Activated CD4-positive, alpha-beta memory T cell treated with anti-CD3 and anti-CD28 coated beads, Interleukin-2, amount 10 ng/mL, durations not matched to agents 7 days and 5 days (primary cell): ENCODE measurements at regions of chr2 and their contacts with region 1.

Region 1: GRCh38 chr2:36785179-36785795 is 88.8 kb downstream of the VIT start:
- DNase-seq: peak; percentile 67
- H3K4me3 Mint-ChIP-seq: no peak overlapping the region
- H3K27ac Mint-ChIP-seq: no peak overlapping the region
- H3K4me1 Mint-ChIP-seq: no peaks in the 10 kb centered on the region
- H3K27me3 Mint-ChIP-seq: peaks cover 38% of the 10 kb centered on the region

Region 2: DNA sequence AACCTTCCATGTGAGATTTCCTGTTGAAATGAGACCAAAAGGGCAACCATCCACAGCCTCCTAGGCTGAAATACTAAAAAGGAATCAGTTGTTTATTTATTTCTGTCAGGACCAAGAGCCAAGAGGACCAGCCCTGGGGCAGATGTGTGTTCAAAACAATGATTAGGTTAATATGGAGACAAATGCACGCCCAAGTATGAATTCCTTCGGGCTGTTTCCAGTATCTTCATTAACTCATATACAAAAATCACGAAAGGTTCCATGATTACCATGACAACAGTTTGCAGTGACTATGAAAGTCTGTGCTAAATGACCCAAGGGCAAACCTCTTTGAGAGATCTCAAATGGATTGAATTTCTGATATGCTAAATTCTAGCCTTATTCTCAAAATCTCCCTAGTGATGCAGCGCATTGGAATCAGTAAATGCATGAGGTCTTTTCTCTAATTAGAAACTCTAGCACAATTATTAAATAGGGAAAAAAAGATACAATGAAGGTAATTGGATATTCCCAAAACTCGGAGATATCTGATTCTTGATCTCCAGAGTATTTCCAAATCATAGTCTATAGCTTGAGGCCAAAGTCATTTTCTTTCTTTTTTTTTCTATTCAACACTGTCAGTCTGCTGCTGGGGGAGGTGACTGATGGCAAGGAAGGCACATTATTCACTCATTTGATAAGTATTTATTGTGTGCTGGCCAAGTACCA is 53.2 kb before region 1 on chr2:
- CTCF ChIA-PET with region 1: no interaction called
- POLR2A ChIA-PET with region 1: no interaction called
- DNase-seq: no peak
- H3K4me3 Mint-ChIP-seq: no peak overlapping the region
- H3K27ac Mint-ChIP-seq: no peak overlapping the region
- H3K4me1 Mint-ChIP-seq: no peaks in the 10 kb centered on the region
- H3K27me3 Mint-ChIP-seq: peaks cover 4% of the 10 kb centered on the region

Region 3: DNA sequence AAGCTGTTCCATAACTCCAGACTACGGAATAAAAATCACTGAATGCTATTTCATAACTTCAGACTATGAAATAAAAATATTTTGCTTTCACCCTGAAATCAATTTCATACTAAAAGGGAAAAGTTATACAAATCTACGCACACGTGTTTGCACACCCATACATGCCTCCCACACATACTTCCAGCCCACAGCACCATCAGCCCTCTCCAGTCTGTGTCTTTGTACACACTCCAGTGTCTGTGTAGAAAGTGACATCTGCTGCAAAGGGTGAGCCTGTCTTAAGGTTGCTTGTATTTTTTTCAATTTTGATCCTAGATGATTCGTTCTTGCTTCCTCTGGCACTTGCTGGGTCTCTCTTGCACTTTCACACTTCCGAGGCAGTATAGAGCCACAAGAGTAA is 35.2 kb before region 1 on chr2:
- CTCF ChIA-PET with region 1: no interaction called
- POLR2A ChIA-PET with region 1: no interaction called
- DNase-seq: no peak
- H3K4me3 Mint-ChIP-seq: no peak overlapping the region
- H3K27ac Mint-ChIP-seq: no peak overlapping the region
- H3K4me1 Mint-ChIP-seq: no peaks in the 10 kb centered on the region
- H3K27me3 Mint-ChIP-seq: peaks cover 34% of the 10 kb centered on the region

Region 4: DNA sequence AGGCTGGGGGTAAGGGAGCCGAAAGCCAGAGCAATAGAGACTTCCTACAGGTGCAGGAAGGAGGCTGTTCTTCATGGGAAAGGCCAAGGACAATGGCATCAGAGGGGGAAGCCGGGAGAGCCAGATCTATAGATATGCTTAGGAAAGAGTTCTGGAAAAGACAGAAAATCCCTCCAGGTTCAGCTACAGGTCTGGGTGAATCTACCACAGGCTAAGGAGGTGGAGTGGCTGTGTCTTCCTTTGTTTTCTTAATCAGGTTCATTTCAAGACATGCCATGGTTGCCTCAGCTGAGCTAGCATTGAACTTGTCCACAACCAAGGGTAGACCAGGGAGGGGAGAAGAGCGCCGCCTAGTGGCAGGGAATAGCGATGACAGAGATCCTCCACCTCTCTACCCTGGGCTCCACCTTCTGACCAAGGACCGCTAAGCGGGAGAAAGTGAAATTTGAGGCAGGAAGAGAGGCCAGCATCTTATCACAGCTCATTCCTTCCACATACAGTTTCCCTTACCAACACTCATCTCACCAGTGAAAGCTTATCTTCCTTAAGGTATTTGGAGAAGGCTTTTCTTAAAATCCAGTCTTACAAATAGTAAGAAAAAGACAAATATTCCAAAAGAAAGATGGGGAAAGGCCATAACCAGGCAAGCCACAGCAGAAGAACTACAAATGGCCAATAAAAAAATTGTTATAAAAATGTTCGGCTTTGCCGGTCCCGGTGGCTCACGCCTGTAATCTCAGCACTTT is 14.6 kb before region 1 on chr2:
- CTCF ChIA-PET with region 1: interaction called, 31 read pairs
- POLR2A ChIA-PET with region 1: no interaction called
- DNase-seq: peak; percentile 43
- H3K4me3 Mint-ChIP-seq: no peak overlapping the region
- H3K27ac Mint-ChIP-seq: no peak overlapping the region
- H3K4me1 Mint-ChIP-seq: no peaks in the 10 kb centered on the region
- H3K27me3 Mint-ChIP-seq: peaks cover 10% of the 10 kb centered on the region

Region 5: GRCh38 chr2:36902385-36903120 is 117.3 kb after region 1 on chr2:
- CTCF ChIA-PET with region 1: no interaction called
- POLR2A ChIA-PET with region 1: no interaction called
- DNase-seq: no peak
- H3K4me3 Mint-ChIP-seq: no peak overlapping the region
- H3K27ac Mint-ChIP-seq: no peak overlapping the region
- H3K4me1 Mint-ChIP-seq: no peaks in the 10 kb centered on the region
- H3K27me3 Mint-ChIP-seq: no peaks in the 10 kb centered on the region